Activated CD8-positive, alpha-beta T cell treated with anti-CD3 and anti-CD28 coated beads, Interleukin-2, amount 10 ng/mL, durations not matched to agents 7 days and 5 days (primary cell): ENCODE measurements at regions of chr17 and their contacts with region 1.

Region 1: DNA sequence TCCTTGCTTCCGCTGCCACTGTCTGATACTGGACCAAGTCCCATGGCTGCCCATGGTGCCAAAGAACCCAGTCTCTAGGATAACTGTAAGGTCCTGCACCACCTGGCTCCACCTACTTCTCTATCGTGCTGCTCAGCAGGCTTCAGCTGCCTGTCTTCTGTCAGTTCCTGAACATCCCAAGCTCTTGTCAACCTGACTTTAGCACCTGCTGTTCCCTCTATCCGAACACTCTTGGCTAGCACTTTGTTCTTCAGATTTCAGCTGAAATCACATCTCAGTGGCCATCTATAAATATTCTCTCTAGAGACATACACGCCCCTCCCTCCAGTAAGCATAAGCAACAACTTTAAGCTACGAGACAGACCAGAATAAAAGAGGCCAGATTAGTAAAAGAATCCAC is 15.0 kb upstream of the TMEM101 start:
- DNase-seq: no peak
- ATAC-seq: no peak
- H3K4me3 Mint-ChIP-seq: no peak overlapping the region
- H3K27ac Mint-ChIP-seq: peak overlapping the region; percentile 1
- H3K4me1 Mint-ChIP-seq: peaks cover 21% of the 10 kb centered on the region
- H3K27me3 Mint-ChIP-seq: no peaks in the 10 kb centered on the region

Region 2: DNA sequence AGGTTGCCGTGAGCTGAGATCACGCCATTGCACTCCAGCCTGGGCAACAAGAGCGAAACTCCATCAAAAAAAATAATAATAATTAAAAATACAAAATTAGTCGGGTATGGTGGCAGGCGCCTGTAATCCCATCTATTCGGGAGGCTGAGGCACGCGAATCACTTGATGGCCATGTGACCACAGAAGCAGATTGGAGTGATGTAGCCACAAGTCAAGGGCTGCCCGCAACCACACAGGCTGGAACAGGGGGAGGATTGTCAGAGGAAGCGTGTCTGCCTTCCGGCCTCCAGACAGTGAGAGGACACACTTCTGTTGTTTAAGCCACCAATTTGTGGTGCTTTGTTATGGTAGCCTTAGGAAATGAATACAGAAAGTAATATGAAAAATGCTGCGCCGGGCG is 37.1 kb before region 1 on chr17:
- CTCF ChIA-PET with region 1: no interaction called
- POLR2A ChIA-PET with region 1: no interaction called
- DNase-seq: no peak
- ATAC-seq: no peak
- H3K4me3 Mint-ChIP-seq: no peak overlapping the region
- H3K27ac Mint-ChIP-seq: no peak overlapping the region
- H3K4me1 Mint-ChIP-seq: no peaks in the 10 kb centered on the region
- H3K27me3 Mint-ChIP-seq: peaks cover 30% of the 10 kb centered on the region

Region 3: GRCh38 chr17:44044067-44044466 is 14.3 kb after region 1 on chr17:
- CTCF ChIA-PET with region 1: interaction called, 34 read pairs
- POLR2A ChIA-PET with region 1: no interaction called
- DNase-seq: no peak
- ATAC-seq: no peak
- H3K4me3 Mint-ChIP-seq: no peak overlapping the region
- H3K27ac Mint-ChIP-seq: no peak overlapping the region
- H3K4me1 Mint-ChIP-seq: peaks cover 17% of the 10 kb centered on the region
- H3K27me3 Mint-ChIP-seq: no peaks in the 10 kb centered on the region